Adrenal gland (tissue), 19 donors: ENCODE measurements at regions of chr14 and their contacts with region 1.

Region 1: DNA sequence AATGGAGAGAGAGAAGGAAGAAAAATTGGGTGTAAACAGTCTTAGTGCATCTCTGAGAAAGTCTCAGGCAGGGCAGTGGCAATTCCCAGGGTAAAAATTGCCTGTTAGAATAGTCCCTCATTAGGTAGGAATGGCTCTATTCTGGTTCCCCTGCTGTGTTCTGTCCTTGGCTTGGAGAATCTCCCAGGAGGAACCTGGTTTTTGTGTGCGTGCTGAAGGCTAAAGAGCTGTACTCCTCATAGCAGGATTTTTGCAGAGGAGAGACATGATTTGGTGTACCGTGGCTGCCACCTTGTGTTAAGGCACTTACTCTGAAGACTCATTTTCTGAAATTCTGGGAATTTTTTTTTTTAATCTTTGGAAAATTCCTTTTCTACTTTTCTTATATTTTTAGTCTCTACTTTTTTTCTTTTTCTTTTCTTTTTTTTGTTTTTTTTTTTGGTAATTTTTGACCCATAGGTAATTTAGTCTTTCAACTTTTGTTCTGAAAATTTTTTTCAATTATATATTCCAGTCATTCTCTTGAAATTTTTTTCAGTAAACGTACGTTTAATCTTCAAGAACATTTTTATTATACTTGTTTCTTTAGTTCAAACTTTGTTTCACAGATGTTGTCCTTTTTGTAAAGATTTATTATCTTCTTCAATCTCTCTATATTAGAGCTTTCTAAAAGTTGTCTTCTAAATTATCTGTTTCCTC is 63.8 kb downstream of the FBXO33 start:
- DNase-seq: peak; percentile 72 to 90 (median 84)
- H3K4me3 ChIP-seq: no peak overlapping the region
- H3K27ac ChIP-seq: peak overlapping the region in 3 of 5 donors; percentile 3 to 53 (median 4)
- H3K4me1 ChIP-seq: peaks cover 0 to 18% of the 10 kb centered on the region in 2 donors
- H3K27me3 ChIP-seq: no peaks in the 10 kb centered on the region
- CTCF ChIP-seq: peak; percentile 31 to 90 (median 66)
- POLR2A ChIP-seq: no peak

Region 2: DNA sequence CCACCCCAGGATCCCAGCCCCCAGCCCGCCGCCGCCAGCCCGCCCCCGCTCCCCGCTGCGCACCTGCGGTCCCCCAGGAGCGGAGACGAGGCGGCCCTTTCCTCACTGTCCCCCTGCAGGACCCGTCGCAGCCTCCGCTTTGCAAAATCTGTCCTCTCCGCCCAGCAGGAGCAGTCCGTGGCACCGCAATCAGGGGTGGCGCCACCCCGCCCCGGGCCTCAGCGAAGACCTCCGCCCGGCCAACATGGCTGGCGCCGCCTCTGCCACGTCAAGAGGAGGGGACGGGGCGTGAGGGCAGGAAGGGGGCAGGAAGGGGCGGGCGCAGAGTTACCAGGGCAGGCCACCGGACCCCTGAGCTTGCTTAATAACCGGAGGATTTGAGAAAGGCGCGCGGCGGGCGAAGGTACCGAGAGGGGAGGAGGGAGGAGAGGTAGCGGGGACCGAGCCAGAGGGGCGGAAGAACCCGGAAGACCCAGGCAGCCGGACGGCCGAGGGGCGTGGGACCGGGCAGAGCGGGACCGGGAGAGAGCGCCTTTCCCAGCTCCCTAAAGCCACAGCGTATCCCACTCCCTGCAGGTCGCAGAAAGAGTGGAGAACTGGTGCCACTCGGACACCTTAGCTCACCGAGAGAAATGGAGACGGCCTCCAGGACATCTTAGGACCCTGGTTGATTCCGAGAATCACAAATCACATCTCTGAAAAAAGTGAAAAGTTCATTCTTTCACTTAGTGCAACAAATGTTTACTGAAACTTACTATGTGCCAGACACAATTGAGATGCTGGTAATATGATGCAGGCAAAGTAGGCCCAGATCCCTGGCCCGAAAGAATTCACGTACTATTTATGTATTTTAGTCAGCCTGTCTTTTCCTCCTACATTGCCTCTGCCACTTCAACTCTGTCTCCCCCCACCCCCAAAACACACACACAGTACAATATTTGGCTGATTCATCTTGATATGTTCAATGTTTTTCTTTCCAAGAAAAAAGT is 265.1 kb before region 1 on chr14 and contains the start of gene SEC23A:
- intact Hi-C with region 1: loop called in 1 of 2 experiments (anchors 10 kb)
- DNase-seq: peak; percentile 90 to 95 (median 94)
- H3K4me3 ChIP-seq: peak within 1 kb of the TSS; percentile 63 to 75 (median 69)
- H3K27ac ChIP-seq: peak within 1 kb of the TSS; percentile 83 to 97 (median 96)
- H3K4me1 ChIP-seq: peaks cover 10 to 34% of the 10 kb centered on the region in 2 donors
- H3K27me3 ChIP-seq: no peaks in the 10 kb centered on the region
- CTCF ChIP-seq: no peak
- POLR2A ChIP-seq: peak; percentile 83 to 87
- total RNA-seq, gene SEC23A: 72.0 to 201 (median 98.5) TPM